A549 (cell line): ENCODE measurements at regions of chr22 and their contacts with region 1.

Region 1: GRCh38 chr22:41925655-41926460 is 748 bp downstream of the TNFRSF13C start:
- DNase-seq: peak in 1 of 2 experiments; percentile 48
- ATAC-seq: peak; percentile 76 to 81
- H3K4me3 ChIP-seq: peak overlapping the region; percentile 64
- H3K27ac ChIP-seq: peak overlapping the region; percentile 74 to 90
- H3K4me1 ChIP-seq: no peaks in the 10 kb centered on the region
- CTCF ChIP-seq: peak; percentile 71
- EP300 ChIP-seq: no peak
- POLR2A ChIP-seq: no peak
- RAD21 ChIP-seq: no peak; a peak in 1 of 5 replicates

Region 2: GRCh38 chr22:41863472-41863871 is 62.4 kb before region 1 on chr22:
- CTCF ChIA-PET with region 1: interaction called, 12 read pairs
- POLR2A ChIA-PET with region 1: no interaction called
- DNase-seq: no peak
- ATAC-seq: no peak
- H3K4me3 ChIP-seq: no peak overlapping the region
- H3K27ac ChIP-seq: no peak overlapping the region
- H3K4me1 ChIP-seq: peaks cover 25% of the 10 kb centered on the region
- CTCF ChIP-seq: no peak
- EP300 ChIP-seq: no peak
- POLR2A ChIP-seq: no peak
- RAD21 ChIP-seq: no peak

Region 3: DNA sequence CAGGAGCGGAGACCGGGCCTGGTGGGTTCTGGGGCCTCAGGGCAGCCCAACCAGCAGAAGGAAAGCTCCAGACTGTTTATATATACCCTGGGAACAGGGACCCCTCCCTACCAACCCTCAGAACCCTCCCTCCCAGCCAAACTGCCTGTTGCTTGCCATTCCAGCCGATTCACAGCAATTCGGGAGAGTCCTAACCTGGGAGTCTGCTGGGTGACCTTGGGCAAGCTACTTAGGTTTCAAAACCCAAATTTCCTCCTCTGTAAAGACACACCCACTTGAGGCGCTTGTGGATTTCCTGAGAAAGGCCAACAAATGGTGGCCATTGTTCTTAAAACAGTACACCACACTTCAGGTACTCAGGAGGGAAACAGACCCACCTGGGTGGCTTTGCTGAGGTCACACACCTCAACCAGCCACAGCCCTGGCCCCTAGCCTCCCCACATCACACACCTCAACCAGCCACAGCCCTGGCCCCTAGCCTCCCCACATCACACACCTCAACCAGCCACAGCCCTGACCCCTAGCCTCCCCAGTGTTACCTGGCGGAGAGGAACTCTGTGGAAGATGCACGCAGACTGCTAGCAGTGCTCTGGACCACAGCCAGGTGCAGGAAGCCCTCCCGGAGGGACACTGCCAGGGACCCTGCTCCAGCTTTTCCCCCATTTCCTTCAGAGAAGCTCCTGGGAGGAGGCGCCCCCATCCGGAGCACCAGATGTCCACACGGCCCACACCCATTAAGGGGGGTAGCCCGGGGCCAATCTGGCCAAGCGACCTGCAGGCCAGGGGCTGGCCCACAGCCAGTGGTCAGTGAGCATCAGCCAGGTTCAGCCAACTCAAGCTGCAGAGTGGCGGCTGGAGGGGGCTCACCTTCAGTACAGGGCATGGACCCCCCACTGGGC is 17.2 kb before region 1 on chr22:
- CTCF ChIA-PET with region 1: interaction called, 11 read pairs
- POLR2A ChIA-PET with region 1: no interaction called
- DNase-seq: no peak
- ATAC-seq: no peak
- H3K4me3 ChIP-seq: no peak overlapping the region
- H3K27ac ChIP-seq: no peak overlapping the region
- H3K4me1 ChIP-seq: no peaks in the 10 kb centered on the region
- CTCF ChIP-seq: no peak
- EP300 ChIP-seq: no peak
- POLR2A ChIP-seq: no peak
- RAD21 ChIP-seq: no peak

Region 4: GRCh38 chr22:41915035-41915785 is 10.6 kb before region 1 on chr22 and contains the start of gene SHISA8:
- CTCF ChIA-PET with region 1: interaction called, 15 read pairs
- POLR2A ChIA-PET with region 1: no interaction called
- DNase-seq: no peak
- ATAC-seq: peak; percentile 46 to 56; a peak in 4 of 6 replicates
- H3K4me3 ChIP-seq: peak within 1 kb of the TSS; percentile 63
- H3K27ac ChIP-seq: peak within 1 kb of the TSS; percentile 46 to 80; a peak in 4 of 6 replicates
- H3K4me1 ChIP-seq: peaks cover 4% of the 10 kb centered on the region; the same call in 2 of the 3 replicates
- CTCF ChIP-seq: no peak
- EP300 ChIP-seq: no peak
- POLR2A ChIP-seq: no peak
- RAD21 ChIP-seq: no peak
- polyA plus RNA-seq, gene SHISA8: not detected in 2 replicates